Mammary epithelial cell (primary cell): ENCODE measurements at regions of chr3 and their contacts with region 1.

Region 1: DNA sequence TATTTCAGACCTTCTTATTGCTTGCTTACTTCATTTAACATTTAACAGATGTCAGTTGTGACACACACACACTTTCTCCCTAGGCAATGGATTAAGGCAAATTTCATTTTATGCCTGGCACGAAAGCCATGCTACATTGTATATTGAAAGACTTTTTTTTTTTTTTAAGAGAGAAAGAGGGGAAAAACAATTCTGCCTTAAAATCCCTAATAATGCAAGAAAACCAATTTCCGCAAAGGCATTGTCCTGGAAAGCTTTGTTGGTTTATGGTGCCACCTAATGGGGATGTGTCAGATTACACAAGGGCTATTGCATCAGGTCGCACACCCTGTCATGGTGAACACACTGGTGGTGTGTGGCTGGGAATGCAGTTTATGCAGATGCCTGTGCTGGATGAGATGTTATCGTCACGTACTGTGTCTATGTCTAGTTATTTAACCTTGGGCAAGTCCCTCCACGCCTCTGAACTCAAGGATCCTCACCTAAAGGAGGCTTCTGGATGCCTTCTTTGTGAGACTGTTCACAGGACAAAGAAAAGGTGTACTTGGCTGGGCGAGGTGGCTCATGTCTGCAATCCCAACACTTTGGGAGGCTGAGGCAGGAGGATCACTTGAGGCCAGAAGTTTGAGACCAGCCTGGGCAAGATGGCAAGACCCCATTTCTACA is 37.3 kb upstream of the RFTN1 start:
- DNase-seq: peak; percentile 88
- H3K4me3 ChIP-seq: peak overlapping the region; percentile 1 to 30 (median 3)
- H3K27ac ChIP-seq: peak overlapping the region; percentile 1
- H3K4me1 ChIP-seq: peaks cover 26% of the 10 kb centered on the region
- H3K27me3 ChIP-seq: no peaks in the 10 kb centered on the region
- CTCF ChIP-seq: peak; percentile 78 to 85

Region 2: DNA sequence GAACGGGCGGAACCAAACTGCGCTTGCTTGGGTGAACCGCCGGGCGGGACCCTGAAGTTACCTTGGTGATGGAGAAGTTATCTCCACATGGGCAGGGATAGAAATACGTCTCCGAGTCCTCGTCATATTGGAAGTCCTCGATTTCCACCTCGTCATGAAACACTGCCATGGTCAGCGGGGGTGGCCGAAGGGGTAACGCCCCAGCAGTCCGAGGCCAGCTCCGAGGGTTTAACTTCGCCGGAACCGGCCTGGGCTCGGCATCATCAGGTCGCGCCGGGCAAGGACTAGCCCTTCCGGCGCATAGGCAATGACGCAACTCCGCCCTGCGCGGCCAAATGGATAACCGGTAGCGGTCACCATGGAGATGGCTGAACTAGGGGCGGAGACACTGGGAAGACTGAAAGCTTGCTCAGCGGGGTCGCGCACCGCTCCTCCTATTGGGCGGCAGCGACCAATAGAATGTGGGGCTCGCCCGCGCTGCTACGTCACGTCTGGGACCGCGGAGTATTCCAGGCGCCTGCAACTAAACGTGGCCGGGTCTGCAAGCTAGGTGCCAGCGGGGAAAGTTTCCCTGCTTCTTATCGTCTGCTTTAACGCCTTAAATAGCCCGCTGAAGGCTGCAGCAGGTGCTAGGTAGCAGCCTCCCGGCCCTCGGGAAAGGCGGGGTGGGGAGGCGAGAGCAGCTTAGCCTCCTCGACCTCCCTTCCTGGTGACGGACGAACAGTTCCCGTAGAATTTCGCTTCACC is 285.9 kb before region 1 on chr3 and contains the starts of genes DPH3 and OXNAD1:
- CTCF ChIA-PET with region 1: no interaction called
- dilution Hi-C with region 1: no loop called
- in situ Hi-C with region 1: no loop called
- intact Hi-C with region 1: loop called (anchors 1 kb)
- DNase-seq: peak; percentile 99
- H3K4me3 ChIP-seq: peak within 1 kb of the TSS; percentile 93 to 99 (median 97)
- H3K27ac ChIP-seq: peak within 1 kb of the TSS; percentile 97
- H3K4me1 ChIP-seq: peaks cover 24% of the 10 kb centered on the region
- H3K27me3 ChIP-seq: no peaks in the 10 kb centered on the region
- CTCF ChIP-seq: no peak
- total RNA-seq, gene DPH3: 16.3 to 27.8 TPM
- total RNA-seq, gene OXNAD1: 11.3 to 13.7 TPM

Region 3: GRCh38 chr3:16290007-16290826 is 260.6 kb before region 1 on chr3:
- CTCF ChIA-PET with region 1: interaction called, 14 read pairs
- dilution Hi-C with region 1: no loop called
- in situ Hi-C with region 1: loop called (anchors 5 to 10 kb)
- intact Hi-C with region 1: loop called (anchors 1 kb)
- DNase-seq: peak; percentile 28
- H3K4me3 ChIP-seq: no peak overlapping the region
- H3K27ac ChIP-seq: no peak overlapping the region
- H3K4me1 ChIP-seq: peaks cover 4% of the 10 kb centered on the region
- H3K27me3 ChIP-seq: no peaks in the 10 kb centered on the region
- CTCF ChIP-seq: peak; percentile 69 to 77

Region 4: GRCh38 chr3:16516695-16517481 is 33.9 kb before region 1 on chr3:
- CTCF ChIA-PET with region 1: no interaction called
- dilution Hi-C with region 1: no loop called
- in situ Hi-C with region 1: no loop called
- intact Hi-C with region 1: loop called (anchors 1 kb)
- DNase-seq: peak; percentile 35
- H3K4me3 ChIP-seq: no peak overlapping the region
- H3K27ac ChIP-seq: no peak overlapping the region
- H3K4me1 ChIP-seq: peaks cover 15% of the 10 kb centered on the region
- H3K27me3 ChIP-seq: peaks cover 2% of the 10 kb centered on the region
- CTCF ChIP-seq: peak; percentile 23 to 61